Heart left ventricle (tissue), 16 donors: ENCODE measurements at regions of chr13 and their contacts with region 1.

Region 1: GRCh38 chr13:80555796-80556678 is 215.1 kb upstream of the SPRY2 start:
- DNase-seq: no peak
- ATAC-seq: no peak
- H3K4me3 ChIP-seq: no peak overlapping the region
- H3K27ac ChIP-seq: no peak overlapping the region
- H3K4me1 ChIP-seq: peaks cover 0 to 22% (median 5%) of the 10 kb centered on the region in 12 donors
- H3K27me3 ChIP-seq: no peaks in the 10 kb centered on the region
- CTCF ChIP-seq: no peak
- POLR2A ChIP-seq: no peak

Region 2: DNA sequence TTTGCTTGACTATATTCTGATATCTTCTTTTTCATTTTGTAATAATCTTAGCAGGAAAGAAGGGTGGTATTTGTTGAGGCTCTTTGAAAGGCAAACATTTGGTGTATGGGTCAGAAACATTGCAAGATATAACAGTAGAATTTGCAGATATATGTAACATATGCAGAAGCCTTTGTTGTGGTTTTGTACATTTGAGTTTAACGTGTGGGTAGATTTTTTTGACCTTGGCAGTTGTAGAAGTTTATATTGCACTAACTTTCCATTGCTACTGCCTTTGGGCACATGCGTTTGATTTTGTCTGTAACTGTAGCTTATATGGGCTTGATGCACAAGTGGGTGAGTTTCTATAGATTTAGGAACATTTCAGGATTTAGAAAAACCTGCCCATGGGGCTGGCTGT is 136.6 kb before region 1 on chr13:
- intact Hi-C with region 1: no loop called
- DNase-seq: no peak
- ATAC-seq: no peak
- H3K4me3 ChIP-seq: no peak overlapping the region
- H3K27ac ChIP-seq: no peak overlapping the region
- H3K4me1 ChIP-seq: no peaks in the 10 kb centered on the region
- H3K27me3 ChIP-seq: no peaks in the 10 kb centered on the region
- CTCF ChIP-seq: no peak
- POLR2A ChIP-seq: no peak

Region 3: DNA sequence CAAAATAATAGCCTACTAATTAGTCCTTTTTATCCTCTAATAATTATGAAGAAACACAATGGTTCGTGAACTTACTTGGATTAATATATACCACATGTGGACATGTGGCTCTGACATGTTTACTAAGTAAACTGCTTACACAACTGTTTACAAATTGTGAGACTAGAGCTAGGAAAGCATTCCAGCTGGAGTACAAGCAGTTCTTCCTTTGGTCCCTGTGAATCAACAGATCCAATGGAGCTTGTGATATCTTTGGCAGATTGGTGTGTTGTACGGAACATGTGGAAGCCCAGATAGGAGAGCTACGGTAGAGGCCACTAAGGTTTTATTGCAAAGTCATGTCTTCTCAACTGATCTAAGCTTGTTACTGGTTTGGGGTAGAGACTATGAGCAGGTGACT is 69.6 kb before region 1 on chr13:
- intact Hi-C with region 1: loop called in 1 of 10 experiments (anchors 5 kb)
- DNase-seq: no peak
- ATAC-seq: no peak
- H3K4me3 ChIP-seq: no peak overlapping the region
- H3K27ac ChIP-seq: no peak overlapping the region
- H3K4me1 ChIP-seq: peaks cover 0 to 12% (median 0%) of the 10 kb centered on the region in 12 donors
- H3K27me3 ChIP-seq: no peaks in the 10 kb centered on the region
- CTCF ChIP-seq: no peak
- POLR2A ChIP-seq: no peak

Region 4: DNA sequence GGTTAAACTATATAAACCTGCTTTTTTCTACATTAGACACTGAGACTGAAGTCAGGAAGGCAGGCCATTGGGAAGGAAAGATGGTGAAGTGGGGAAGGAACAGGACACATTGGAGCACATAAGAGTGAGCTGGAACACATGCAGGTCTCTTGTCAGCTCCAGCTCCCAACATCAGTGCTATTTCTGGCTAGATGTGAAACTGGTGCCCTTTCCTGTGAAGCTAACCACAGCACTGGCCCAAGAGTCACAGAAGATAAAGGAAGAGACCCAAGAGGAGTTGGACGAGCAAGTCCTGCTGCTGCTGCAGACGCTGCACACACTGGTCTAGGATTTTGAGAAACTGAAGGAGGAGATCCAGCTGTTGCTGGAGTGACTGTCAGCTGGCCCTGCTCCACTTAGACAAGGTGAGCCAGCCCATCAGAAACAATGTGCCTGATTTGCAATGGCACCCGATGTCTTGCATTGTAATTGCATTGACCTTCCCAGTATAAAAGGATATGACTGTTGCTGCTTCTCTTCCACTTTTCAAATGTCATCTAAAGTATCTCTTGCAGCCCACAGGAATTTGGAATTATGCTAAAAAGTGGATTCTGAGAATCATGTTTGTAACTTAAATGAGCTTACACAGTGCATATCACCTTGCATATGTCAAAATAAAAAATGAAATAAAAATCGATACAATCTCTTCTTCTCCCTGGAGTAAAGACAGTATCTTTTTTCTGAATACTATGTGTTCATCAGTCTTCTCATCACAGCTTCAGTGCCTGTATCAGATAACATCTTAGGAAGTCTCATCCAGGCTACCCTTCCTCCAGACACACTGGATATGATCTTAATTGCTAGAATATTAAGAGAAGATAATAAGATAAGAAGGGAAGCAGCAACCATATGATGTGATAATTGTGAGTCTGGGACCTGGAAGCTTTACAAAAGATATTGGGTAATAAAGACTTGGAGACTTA is 15.6 kb after region 1 on chr13:
- intact Hi-C with region 1: loop called in 1 of 10 experiments (anchors 1 kb)
- DNase-seq: peak in 4 of 5 donors; percentile 11 to 33 (median 25)
- ATAC-seq: peak; percentile 51 to 98 (median 91)
- H3K4me3 ChIP-seq: no peak overlapping the region
- H3K27ac ChIP-seq: peak overlapping the region in 1 of 12 donors; percentile 28
- H3K4me1 ChIP-seq: peaks cover 0 to 21% (median 5%) of the 10 kb centered on the region in 12 donors
- H3K27me3 ChIP-seq: no peaks in the 10 kb centered on the region
- CTCF ChIP-seq: no peak
- POLR2A ChIP-seq: no peak